Cardiac septum (tissue), 1 donor: ENCODE measurements at regions of chr1 and their contacts with region 1.

Region 1: DNA sequence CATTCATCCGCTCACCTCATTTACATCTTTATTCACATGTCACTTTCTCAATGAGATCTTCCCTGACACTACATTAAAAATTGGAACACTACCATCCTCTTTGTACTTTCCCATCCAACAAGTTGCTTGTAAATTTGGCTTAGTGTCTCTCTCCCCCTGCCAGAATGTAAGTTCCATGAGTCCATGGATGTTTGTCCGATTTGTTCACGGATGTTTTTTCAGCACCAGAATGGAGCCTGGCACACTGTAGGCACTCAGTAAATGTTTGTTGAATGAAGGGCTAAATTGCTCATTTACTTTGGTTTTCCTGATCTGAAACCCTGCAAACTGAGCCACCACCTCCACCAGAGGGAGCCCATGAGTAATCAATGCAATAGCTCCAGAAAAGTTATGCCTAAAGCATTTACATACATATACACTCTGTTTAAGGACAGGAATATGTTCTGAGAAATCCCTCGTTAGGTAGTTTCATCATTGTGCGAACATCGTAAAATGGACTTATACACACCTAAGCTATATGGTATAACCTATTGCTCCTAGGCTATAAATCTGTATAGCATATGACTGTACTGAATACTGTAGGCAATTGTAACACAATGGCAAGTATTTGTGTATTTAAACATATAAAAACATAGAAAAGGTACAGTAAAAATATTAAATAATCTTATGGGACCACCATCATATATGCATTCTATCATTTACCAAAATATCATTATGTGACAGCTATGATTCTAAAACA is 2.8 kb upstream of the EYA3 start:
- DNase-seq: no peak

Region 2: GRCh38 chr1:27858072-27858958 is 232.9 kb before region 1 on chr1:
- intact Hi-C with region 1: no loop called
- DNase-seq: peak; percentile 91

Region 3: DNA sequence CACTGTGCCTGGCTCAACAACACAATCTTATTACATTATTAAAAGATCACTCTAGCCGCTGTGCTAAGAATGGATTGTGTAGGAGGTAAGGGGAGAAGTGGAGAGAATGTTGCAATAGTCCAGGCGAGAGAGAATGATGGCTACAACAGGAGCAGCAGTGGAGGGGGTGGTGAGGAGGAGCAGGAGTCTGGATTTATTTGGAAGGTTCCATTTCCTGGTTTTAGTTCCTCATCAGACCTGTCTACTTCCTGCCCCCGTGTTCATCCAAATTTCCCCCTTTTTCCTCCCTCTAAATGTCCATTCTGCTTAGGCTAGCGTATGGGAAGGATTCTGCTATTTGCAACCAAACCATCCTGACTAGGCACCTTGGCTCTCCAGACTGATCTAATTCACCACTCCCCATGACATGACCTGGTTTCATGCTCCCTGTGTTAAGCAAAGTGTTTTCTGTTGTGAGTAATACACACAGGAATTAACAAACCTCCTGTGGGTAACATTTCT is 32.3 kb after region 1 on chr1:
- intact Hi-C with region 1: no loop called
- DNase-seq: no peak

Region 4: GRCh38 chr1:28156821-28157220 is 65.6 kb after region 1 on chr1:
- intact Hi-C with region 1: no loop called
- DNase-seq: peak; percentile 78

Region 5: DNA sequence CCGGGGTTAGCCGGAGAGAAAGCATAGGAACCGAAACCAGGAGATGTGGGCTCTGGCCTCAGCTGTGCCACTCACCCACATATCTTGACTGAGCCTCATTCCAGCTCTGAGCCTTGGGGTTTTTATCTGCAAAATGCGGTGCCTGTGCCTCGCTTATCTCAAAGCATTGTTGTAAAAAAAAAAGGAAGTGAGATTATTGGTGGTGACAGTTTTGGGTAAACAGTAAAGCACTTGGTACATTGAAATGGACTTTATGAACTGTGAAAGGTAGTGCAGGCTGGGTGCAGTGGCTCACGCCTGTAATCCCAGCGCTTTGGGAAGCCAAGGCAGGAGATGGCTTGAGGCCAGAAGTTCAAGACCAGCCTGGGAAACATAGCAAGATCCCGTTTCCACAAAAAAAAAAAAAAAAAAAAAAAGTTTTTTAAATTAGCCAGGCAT is 81.5 kb after region 1 on chr1:
- intact Hi-C with region 1: no loop called
- DNase-seq: no peak

Region 6: DNA sequence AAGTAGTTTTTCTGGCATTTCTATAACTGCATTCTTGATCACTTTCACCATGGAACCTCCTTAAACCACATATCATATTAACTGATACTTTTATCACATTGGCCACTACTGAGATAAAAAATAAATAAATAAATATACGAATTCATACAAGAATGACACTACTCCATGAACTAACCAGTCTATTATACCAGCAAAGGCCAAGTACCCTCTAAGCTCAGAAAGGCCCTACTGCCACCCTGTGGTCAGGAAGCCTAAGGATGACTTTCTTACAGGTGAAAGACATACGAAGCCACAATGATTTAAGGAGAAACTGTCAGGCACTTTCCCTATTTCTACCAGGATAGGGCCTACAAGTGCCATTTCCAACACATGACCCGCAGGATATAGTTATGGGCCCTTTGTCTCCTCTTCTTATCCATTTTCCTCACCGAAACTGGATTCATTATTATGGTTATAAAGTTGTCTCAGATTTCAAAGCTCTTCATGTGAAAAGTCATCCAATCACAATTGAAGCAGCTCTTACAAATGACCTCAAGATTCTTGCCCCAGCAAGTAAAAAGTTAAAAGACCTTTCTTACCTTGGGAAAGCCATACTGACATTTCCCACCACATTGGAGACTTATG is 117.7 kb after region 1 on chr1:
- intact Hi-C with region 1: loop called (anchors 1 kb)
- DNase-seq: peak; percentile 78